ENCODE measurements at regions of chr5 and their contacts with region 1.

Region 1: GRCh38 chr5:76849419-76850291 is at the start of gene S100Z:
- DNase-seq: peak; percentile 6 to 69 (median 30)
- ATAC-seq: peak; percentile 93
- H3K4me3 ChIP-seq: peak within 1 kb of the TSS; percentile 13
- H3K4me3 Mint-ChIP-seq: peak within 1 kb of the TSS; percentile 38
- H3K27ac ChIP-seq: peak within 1 kb of the TSS in 1 of 2 donors; percentile 56
- H3K27ac Mint-ChIP-seq: peak within 1 kb of the TSS; percentile 48
- H3K4me1 ChIP-seq: peaks cover 25% of the 10 kb centered on the region
- H3K4me1 Mint-ChIP-seq: peaks cover 31% of the 10 kb centered on the region
- H3K27me3 ChIP-seq: no peaks in the 10 kb centered on the region
- H3K27me3 Mint-ChIP-seq: no peaks in the 10 kb centered on the region
- CTCF ChIP-seq: no peak
- total RNA-seq, gene S100Z: 0.22 to 0.47 TPM

Region 2: GRCh38 chr5:76801159-76801802 is 48.4 kb before region 1 on chr5:
- CTCF ChIA-PET with region 1: no interaction called
- POLR2A ChIA-PET with region 1: no interaction called
- intact Hi-C with region 1: no loop called
- DNase-seq: no peak
- ATAC-seq: no peak
- H3K4me3 ChIP-seq: no peak overlapping the region
- H3K4me3 Mint-ChIP-seq: no peak overlapping the region
- H3K27ac ChIP-seq: no peak overlapping the region
- H3K27ac Mint-ChIP-seq: no peak overlapping the region
- H3K4me1 ChIP-seq: no peaks in the 10 kb centered on the region
- H3K4me1 Mint-ChIP-seq: no peaks in the 10 kb centered on the region
- H3K27me3 ChIP-seq: no peaks in the 10 kb centered on the region
- H3K27me3 Mint-ChIP-seq: no peaks in the 10 kb centered on the region
- CTCF ChIP-seq: no peak

Region 3: GRCh38 chr5:76818844-76819831 is 30.5 kb before region 1 on chr5 and contains the start of gene F2RL1:
- CTCF ChIA-PET with region 1: no interaction called
- POLR2A ChIA-PET with region 1: no interaction called
- intact Hi-C with region 1: loop called in 1 of 2 experiments (anchors 2 kb)
- DNase-seq: peak; percentile 25 to 78 (median 52)
- ATAC-seq: peak; percentile 79
- H3K4me3 ChIP-seq: peak within 1 kb of the TSS; percentile 87
- H3K4me3 Mint-ChIP-seq: peak within 1 kb of the TSS; percentile 92
- H3K27ac ChIP-seq: no peak within 1 kb of the TSS
- H3K27ac Mint-ChIP-seq: peak within 1 kb of the TSS; percentile 36
- H3K4me1 ChIP-seq: peaks cover 21% of the 10 kb centered on the region
- H3K4me1 Mint-ChIP-seq: peaks cover 14% of the 10 kb centered on the region
- H3K27me3 ChIP-seq: peaks cover 10% of the 10 kb centered on the region in 2 experiments
- H3K27me3 Mint-ChIP-seq: peaks cover 20% of the 10 kb centered on the region
- CTCF ChIP-seq: no peak
- total RNA-seq, gene F2RL1: 1.7 to 2.1 TPM

Measured in CD4-positive, alpha-beta T cell (primary cell).